Left cardiac atrium (tissue), 4 donors: ENCODE measurements at regions of chr10 and their contacts with region 1.

Region 1: GRCh38 chr10:62038609-62039190 is 137.2 kb downstream of the ARID5B start:
- DNase-seq: peak; percentile 76
- ATAC-seq: peak; percentile 64 to 74

Region 2: DNA sequence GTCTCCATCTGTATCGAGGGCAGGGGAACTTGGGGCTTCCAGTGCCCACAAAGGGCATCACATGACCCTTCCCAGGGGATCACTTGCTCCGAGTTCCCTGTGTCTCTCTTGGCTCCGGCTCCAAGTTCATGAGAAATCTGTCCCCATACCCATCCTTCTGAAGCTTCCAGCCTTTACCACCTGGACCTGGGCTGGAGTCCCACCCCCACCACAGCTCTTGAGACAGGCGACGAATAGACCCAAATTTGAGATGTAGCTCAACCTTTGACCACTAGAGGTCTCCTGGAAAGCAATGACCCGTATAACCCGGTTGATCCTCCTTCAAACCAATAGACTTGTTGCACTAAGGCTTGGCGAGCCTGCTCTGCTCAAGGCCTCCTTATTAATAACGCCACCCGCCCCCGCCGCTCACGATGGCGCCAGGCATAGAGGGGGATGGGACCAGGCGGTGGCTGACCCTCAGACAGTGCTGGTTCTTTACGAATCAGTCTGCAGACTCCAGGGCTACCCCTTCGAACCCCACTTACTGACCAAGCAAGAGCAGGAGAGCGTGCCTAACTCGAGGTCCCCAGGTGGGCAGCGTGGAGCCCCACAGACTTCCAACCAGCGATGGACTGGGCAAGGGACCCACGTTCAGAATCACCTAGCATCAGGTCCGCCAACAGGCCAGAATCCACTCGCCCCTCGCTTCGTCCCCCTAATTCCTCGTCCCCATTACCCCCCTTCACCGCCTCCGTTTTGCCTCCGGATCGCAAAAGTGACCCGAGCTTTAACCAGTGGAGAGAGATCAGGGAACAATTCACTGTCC is 141.6 kb before region 1 on chr10:
- intact Hi-C with region 1: loop called (anchors 5 to 10 kb)
- DNase-seq: peak; percentile 69
- ATAC-seq: peak; percentile 85 to 90

Region 3: DNA sequence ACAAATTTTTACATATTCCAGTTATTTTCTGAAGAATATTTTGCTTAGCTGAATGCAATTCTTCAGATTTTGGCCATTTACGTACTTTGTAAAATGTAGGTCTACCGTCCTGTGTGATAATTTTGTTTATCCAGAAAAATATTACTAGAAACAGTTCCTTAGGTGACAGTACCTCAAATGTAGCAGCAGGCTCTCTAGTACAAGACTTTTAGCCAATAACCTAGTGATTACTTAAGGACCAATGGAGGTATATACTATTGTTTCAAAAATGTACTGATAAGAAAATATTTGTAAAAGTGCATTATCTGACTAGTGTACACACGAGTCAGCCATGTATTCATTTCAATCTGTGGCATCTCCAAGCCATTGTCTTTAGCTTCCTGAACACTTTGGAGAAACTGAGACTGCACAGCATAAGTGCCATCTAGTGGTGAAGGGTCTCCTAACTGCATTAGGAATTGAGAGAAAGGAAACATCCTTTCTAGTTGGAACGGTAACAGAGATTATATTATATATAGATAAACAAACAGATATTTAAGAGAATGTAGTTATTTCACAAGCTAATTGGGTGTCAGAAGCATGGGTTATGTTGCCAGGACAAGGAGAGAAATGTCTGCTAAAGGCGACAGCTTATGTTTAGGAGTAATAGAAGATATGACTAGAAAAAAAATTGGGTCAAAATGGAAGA is 206.2 kb after region 1 on chr10:
- intact Hi-C with region 1: loop called (anchors 1 to 5 kb)
- DNase-seq: no peak
- ATAC-seq: peak; percentile 81 to 82